Ovary (tissue), 10 donors: ENCODE measurements at regions of chr3 and their contacts with region 1.

Region 1: GRCh38 chr3:103269287-103269686 is 834.5 kb downstream of the ZPLD1 start:
- DNase-seq: no peak
- H3K4me3 ChIP-seq: no peak overlapping the region
- H3K27ac ChIP-seq: no peak overlapping the region
- H3K4me1 ChIP-seq: no peaks in the 10 kb centered on the region
- H3K27me3 ChIP-seq: no peaks in the 10 kb centered on the region
- CTCF ChIP-seq: no peak
- EP300 ChIP-seq: no peak
- POLR2A ChIP-seq: no peak

Region 2: GRCh38 chr3:103200405-103200804 is 68.9 kb before region 1 on chr3:
- intact Hi-C with region 1: loop called in 1 of 4 experiments (anchors 5 kb)
- DNase-seq: no peak
- H3K4me3 ChIP-seq: no peak overlapping the region
- H3K27ac ChIP-seq: no peak overlapping the region
- H3K4me1 ChIP-seq: no peaks in the 10 kb centered on the region
- H3K27me3 ChIP-seq: no peaks in the 10 kb centered on the region
- CTCF ChIP-seq: no peak
- EP300 ChIP-seq: no peak
- POLR2A ChIP-seq: no peak

Region 3: DNA sequence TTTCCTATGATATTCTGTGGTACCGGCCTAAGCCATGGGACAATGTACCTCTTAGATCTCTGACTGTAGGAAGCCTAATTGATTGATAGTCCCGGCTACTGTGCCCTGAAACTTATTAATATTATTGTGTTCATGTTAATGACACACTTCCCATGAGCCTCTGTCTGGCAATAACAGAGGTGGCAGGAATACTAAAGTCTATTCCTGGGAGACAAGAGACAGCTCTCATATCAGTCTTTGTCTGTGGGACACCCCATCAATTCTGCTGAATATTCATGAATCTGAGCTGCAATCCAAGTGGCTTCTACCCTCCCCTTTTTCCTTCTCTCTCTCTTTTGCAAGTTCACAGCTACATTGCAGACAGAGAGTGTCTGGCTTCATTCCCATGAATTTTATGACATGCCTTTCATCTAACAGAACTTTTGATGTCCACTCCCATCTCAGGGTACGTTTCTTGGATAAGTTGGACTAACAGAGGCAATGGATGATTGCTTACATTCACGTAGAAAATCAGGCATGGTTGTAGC is 73.0 kb after region 1 on chr3:
- intact Hi-C with region 1: loop called in 1 of 4 experiments (anchors 1 kb)
- DNase-seq: no peak
- H3K4me3 ChIP-seq: no peak overlapping the region
- H3K27ac ChIP-seq: no peak overlapping the region
- H3K4me1 ChIP-seq: no peaks in the 10 kb centered on the region
- H3K27me3 ChIP-seq: no peaks in the 10 kb centered on the region
- CTCF ChIP-seq: no peak
- EP300 ChIP-seq: no peak
- POLR2A ChIP-seq: no peak